ENCODE measurements at regions of chr10 and their contacts with region 1.

Region 1: GRCh38 chr10:4849555-4850242 is 23.7 kb downstream of the AKR1E2 start:
- DNase-seq: peak; percentile 88
- ATAC-seq: peak; percentile 94
- H3K4me3 Mint-ChIP-seq: no peak overlapping the region
- H3K27ac Mint-ChIP-seq: no peak overlapping the region
- H3K4me1 Mint-ChIP-seq: peaks cover 6% of the 10 kb centered on the region
- H3K27me3 Mint-ChIP-seq: peaks cover 6% of the 10 kb centered on the region

Region 2: GRCh38 chr10:4825851-4826665 is 23.6 kb before region 1 on chr10 and contains the start of gene AKR1E2:
- CTCF ChIA-PET with region 1: interaction called, 76 read pairs
- DNase-seq: peak; percentile 81
- ATAC-seq: peak; percentile 88
- H3K4me3 Mint-ChIP-seq: peak within 1 kb of the TSS; percentile 56
- H3K27ac Mint-ChIP-seq: no peak within 1 kb of the TSS
- H3K4me1 Mint-ChIP-seq: peaks cover 5% of the 10 kb centered on the region
- H3K27me3 Mint-ChIP-seq: peaks cover 75% of the 10 kb centered on the region
- total RNA-seq, gene AKR1E2: 2.5 to 3.1 TPM

Region 3: DNA sequence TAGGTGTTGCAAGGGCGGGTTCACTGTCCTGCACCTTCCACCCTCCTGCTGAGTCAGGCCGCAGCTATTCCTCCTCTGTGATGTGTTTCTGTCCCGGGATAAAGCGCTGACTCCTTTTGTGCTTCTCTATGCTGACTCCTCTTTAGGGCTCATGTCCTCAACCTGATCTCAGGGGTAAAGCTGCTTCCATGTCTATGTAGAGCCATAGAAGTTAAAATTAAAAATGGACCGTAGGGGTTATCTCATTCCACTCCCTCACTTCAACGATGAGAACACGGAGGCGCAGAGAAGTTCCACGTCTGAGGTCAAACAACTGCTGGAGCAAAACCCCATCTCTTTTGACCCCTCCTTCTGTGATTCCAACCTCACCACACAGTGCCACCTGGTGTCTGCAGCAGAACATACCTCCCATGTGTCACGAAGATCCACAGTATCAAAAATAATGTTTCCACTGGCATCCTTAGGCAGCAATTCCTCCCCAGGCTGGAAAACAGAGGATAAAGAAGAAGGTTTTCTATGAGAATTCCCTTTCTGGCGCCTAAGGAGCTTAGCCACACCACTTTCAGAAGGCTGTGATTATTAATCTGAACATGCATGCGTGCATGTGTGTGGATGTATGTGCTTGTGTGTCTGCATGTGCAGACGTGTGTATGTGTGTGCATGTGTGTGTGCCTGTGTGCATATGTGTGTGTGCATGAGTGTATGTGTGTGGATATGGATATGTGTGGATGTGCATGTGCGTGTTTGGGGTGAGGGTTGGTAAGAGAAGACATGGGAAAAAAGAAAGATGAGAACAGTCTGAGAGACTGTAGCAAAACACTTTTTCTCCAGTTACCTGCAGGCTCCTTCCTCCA is 433.8 kb after region 1 on chr10:
- CTCF ChIA-PET with region 1: interaction called, 32 read pairs
- DNase-seq: peak; percentile 73
- ATAC-seq: peak; percentile 79
- H3K4me3 Mint-ChIP-seq: no peak overlapping the region
- H3K27ac Mint-ChIP-seq: peak overlapping the region; percentile 49
- H3K4me1 Mint-ChIP-seq: peaks cover 26% of the 10 kb centered on the region
- H3K27me3 Mint-ChIP-seq: peaks cover 19% of the 10 kb centered on the region

Region 4: DNA sequence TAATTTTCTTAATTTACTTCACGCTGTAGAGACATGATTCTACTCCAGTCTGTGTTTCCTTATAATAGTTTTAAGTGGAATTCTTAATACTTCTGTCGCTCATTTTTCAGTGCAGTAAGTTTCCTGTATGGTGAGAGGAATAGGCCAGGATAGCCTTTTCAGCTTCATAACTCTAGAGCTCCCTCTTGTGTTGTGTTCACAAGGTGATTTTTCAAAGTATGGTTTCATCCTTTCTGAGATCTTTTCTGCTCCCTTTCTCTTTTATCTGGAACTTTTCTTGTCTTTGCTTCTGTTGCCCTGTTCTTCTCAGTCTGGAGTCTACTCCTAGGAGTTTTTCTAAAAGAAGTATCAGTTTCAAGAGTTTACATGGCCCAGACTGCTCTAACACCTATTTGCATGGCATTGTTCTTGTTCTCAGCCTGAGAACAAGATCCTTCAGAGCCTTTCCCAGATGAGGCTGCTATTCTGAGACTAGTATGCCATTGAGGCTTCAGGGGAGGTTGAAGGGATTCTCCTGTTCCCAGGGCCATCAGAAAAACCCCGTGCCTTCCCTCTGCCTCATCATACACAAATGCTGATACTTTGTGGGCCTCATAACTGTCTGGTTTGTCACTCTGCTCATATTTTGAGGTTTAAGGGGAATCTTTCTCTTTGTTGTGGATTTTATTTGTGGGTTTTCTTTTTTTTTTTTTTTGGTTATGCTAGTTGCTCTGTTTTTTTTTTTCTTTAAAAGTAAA is 584.5 kb after region 1 on chr10:
- CTCF ChIA-PET with region 1: interaction called, 40 read pairs
- DNase-seq: no peak
- ATAC-seq: peak; percentile 63
- H3K4me3 Mint-ChIP-seq: no peak overlapping the region
- H3K27ac Mint-ChIP-seq: no peak overlapping the region
- H3K4me1 Mint-ChIP-seq: peaks cover 15% of the 10 kb centered on the region
- H3K27me3 Mint-ChIP-seq: no peaks in the 10 kb centered on the region